AG04449 (cell line): ENCODE measurements at regions of chr16 and their contacts with region 1.

Region 1: DNA sequence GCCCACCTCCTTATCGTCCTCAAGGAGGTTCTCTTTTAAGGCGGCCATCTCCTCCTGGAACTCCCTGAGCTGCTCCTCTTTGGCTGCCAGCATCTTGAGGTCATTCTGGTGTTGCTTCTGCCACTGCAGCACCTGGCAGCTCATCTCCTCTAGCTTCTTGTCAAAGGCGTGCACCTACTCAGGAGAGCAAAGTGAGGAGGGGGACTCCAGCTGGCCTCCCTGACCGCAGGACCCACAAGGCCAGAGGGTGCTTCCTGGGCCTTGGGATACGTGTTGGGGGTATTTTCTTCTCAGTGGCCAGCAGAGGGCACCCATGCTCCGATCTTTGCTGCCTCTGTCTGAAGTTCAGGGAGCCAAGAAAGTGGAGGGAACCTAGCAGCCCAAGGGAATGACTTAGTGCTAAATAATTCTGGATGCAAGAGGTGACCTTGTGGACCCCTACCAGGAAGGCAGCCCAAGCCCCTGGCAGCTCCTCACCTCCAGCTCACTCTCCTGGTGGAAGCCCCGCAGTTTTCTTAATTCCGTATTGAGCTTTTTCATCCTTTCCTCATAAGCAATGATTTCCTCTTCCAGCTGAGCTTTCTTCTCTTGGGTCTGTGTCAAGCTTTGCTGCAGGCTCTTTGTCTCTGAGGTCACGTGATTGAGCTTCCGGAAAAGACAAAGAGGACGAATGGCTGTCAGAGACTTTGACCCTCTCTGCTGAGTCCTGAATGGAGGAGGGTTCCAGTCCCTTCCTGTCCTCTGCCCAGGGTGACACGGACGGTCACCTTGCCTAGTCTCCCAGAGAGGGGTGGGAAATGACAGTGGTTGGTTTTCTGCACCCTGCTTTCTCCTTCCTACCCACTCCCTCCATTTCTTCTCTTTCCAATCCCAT is 31.4 kb downstream of the DHX38 start:
- DNase-seq: peak; percentile 9
- H3K4me3 ChIP-seq: no peak overlapping the region
- CTCF ChIP-seq: peak; percentile 81

Region 2: GRCh38 chr16:72093448-72094265 is 31.3 kb before region 1 on chr16 and contains the starts of genes DHX38 and TXNL4B:
- CTCF ChIA-PET with region 1: interaction called, 15 read pairs
- POLR2A ChIA-PET with region 1: no interaction called
- DNase-seq: peak; percentile 95
- H3K4me3 ChIP-seq: peak within 1 kb of the TSS; percentile 100
- CTCF ChIP-seq: no peak

Region 3: DNA sequence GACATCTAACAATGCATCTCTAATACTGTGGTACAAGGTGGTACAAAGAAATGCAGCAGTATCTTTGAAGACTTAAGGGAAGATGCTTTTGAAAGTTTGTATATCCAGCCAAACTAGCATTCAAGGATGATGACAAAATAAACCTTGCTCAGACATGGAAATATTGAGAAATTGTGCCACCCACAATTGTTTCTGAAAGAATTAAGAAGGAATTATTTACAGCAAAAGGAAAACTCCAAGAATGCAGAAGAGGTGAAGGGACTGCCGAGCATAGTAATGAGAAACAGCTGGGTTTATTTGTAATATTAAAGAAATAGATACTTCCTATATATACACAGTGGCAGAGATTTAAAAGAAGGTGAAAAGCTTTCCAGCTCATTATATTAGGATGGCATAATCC is 17.5 kb after region 1 on chr16:
- CTCF ChIA-PET with region 1: interaction called, 11 read pairs
- POLR2A ChIA-PET with region 1: no interaction called
- DNase-seq: no peak
- H3K4me3 ChIP-seq: no peak overlapping the region
- CTCF ChIP-seq: no peak

Region 4: DNA sequence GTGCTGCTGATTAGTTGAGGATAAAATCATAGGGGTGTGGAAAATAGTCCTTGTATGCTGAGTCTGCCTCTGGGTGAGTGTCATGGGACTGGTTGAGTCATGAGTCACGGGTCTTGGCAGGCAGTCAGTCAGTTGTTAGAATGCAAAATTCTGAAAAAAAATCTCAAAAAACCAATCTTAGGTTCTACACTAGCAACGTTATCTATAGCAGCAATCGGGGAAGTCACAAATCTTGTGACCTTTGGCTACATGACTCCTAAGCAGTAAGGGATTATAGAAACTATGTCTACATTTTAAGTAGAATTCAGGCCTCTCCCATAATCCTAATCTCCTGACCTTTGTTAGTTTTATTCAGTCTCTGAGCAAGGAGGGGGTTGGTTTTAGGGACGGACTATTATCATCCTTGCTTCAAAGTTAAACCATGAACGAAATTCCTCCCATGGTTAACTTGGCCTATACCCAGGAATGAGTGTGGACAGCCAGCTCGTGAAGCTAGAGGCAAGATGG is 64.9 kb after region 1 on chr16:
- CTCF ChIA-PET with region 1: no interaction called
- POLR2A ChIA-PET with region 1: no interaction called
- DNase-seq: peak; percentile 5
- H3K4me3 ChIP-seq: no peak overlapping the region
- CTCF ChIP-seq: no peak

Region 5: GRCh38 chr16:72324578-72324977 is 199.6 kb after region 1 on chr16:
- CTCF ChIA-PET with region 1: no interaction called
- POLR2A ChIA-PET with region 1: no interaction called
- DNase-seq: no peak
- H3K4me3 ChIP-seq: no peak overlapping the region
- CTCF ChIP-seq: no peak

Region 6: DNA sequence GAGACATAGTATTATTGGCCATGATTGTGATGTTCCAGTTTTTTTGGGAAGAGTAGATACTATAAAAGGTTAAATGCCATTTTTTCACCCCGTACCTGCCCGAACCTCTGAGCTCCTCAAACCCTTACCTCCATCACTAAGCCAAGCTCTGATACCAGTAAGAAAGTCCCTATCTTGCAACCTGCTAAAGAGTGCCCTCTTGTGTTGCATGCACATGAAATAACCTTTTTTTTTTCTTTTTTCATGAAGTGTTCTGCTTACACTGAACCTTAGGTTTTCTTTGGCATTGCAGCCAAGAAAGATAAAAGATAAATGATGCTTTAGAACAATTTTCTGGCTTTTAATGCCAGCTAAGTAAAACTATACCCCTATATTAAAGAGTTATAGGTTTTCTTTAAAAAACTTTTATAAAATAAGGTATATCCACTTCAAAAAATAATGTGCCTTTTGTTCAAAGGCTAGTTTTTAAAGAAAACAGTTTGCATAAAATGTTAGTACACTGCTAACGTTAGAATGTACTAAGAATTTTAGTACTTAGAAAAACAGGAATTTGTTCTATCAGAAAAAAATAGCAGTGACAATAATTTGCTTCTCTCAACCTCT is 342.3 kb after region 1 on chr16:
- CTCF ChIA-PET with region 1: interaction called, 56 read pairs
- POLR2A ChIA-PET with region 1: no interaction called
- DNase-seq: peak; percentile 10
- H3K4me3 ChIP-seq: no peak overlapping the region
- CTCF ChIP-seq: peak; percentile 56

Region 7: GRCh38 chr16:73878611-73879010 is 1753.6 kb after region 1 on chr16:
- CTCF ChIA-PET with region 1: interaction called, 15 read pairs
- POLR2A ChIA-PET with region 1: no interaction called
- DNase-seq: peak; percentile 40
- H3K4me3 ChIP-seq: no peak overlapping the region
- CTCF ChIP-seq: peak; percentile 52

Region 8: DNA sequence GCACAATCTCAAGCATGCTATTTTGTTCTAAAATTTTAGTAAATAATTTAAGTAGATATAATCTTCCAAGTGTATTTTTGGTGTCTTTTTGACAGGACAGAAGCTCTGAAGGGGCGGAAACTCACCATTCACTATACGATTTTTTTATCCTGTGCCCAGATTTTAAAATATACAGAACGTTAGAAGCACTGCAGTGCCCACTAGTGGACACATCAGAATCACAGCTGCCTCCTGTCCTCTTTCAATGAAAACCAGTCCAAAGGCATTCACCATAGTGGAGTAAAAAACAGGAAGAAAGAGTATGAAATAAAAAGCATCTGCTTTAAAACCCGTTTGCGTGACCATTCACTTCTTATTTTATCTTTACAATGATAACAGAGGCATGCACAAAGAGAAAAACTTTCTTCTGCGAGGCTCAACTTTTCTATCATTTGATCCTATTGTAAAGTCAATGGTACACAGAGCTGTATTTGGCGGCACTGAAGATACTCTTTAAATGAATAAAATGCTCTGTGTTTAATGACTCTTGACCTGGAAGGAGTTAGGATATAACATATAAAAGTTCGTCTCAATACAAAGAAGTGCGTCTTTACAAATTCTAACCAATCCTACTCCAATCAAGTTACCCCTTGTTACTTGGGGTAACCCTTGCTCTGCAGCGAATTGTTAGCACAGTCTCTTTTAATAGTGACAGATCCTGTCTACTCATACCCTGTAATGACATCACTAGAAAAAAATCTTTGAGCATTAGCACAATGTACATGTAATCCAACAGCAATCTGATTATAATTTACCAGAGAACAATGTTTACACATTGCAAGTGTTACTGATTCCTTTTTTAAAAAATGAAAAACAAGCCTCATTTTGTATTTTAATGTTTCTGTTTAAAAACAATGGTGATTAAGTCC is 1831.8 kb after region 1 on chr16:
- CTCF ChIA-PET with region 1: interaction called, 11 read pairs
- POLR2A ChIA-PET with region 1: no interaction called
- DNase-seq: peak; percentile 14
- H3K4me3 ChIP-seq: no peak overlapping the region
- CTCF ChIP-seq: peak; percentile 62

Region 9: DNA sequence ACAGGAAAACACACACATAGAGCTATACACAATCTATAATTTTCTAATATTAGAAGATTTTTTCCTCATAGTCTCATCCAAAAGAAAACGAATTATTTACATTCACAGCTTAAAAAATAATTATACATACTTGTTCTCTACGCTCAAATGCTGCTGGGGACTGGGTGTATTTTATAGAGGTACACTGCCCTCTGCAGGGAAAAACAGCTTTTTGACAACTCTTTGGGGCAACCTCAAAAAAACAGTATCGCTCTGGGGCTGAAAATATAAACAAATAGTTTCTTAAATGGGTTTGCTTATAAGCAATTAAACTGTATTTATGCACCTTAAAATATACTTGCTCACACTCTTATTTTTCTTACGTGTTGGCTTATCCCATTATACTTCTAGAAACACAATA is 1909.9 kb after region 1 on chr16:
- CTCF ChIA-PET with region 1: interaction called, 14 read pairs
- POLR2A ChIA-PET with region 1: no interaction called
- DNase-seq: no peak
- H3K4me3 ChIP-seq: no peak overlapping the region
- CTCF ChIP-seq: no peak